Right ventricle myocardium inferior (tissue), 1 donor: ENCODE measurements at regions of chr1 and their contacts with region 1.

Region 1: DNA sequence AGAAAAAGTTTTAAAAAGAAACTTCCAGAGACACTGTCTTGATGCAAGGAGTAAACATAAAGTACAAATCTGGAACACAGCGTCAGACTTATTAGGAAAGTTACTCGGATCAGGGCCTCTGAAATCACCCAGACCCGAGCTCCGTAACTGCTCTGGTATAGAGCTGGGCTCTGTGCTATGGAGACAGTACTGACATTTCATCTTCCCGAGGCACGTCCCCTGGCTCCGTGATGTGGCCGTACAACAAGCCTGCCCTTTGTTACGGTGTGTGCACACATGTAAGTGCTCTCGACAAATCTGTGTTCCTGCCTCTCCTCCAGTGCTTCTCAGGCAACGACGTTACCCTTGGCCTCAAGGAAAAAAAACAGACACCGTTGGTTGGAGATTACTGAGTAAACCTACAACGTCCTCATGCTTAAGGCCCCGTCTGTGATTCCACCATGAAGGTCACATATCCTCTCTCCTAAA is 107.0 kb upstream of the IRF2BP2 start:
- DNase-seq: no peak
- ATAC-seq: no peak

Region 2: GRCh38 chr1:234386122-234386521 is 330.8 kb before region 1 on chr1:
- intact Hi-C with region 1: no loop called
- DNase-seq: no peak
- ATAC-seq: no peak

Region 3: DNA sequence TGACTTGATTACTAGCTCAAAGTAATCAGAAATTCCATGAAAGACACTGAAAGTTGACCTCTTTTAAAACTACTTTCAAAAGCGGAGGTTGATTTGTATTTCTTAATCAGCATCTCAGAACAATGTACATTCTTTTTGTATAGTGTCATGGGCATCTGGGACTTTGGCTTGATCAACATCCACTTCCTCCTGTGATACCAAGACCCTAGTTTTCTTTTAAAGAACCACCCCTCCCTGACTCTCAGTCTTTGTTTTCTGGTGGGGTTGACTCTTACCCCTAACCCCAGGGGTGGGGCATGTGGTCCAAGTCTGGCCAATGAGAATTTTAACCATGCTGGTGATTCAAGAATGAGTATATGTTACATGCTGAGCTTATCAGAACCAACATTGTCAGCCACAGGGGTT is 85.2 kb before region 1 on chr1:
- intact Hi-C with region 1: no loop called
- DNase-seq: no peak
- ATAC-seq: no peak

Region 4: GRCh38 chr1:234676103-234676594 is 40.8 kb before region 1 on chr1:
- intact Hi-C with region 1: loop called (anchors 5 kb)
- DNase-seq: peak; percentile 89
- ATAC-seq: peak; percentile 95